Activated CD4-positive, alpha-beta T cell treated with anti-CD3 and anti-CD28 coated beads, Interleukin-2, amount 10 ng/mL, durations not matched to agents 24 days and 14 days (primary cell): ENCODE measurements at regions of chr9 and their contacts with region 1.

Region 1: GRCh38 chr9:33816327-33817252 is at the start of gene UBE2R2:
- DNase-seq: peak; percentile 97
- H3K4me3 Mint-ChIP-seq: peak within 1 kb of the TSS; percentile 94
- H3K27ac Mint-ChIP-seq: peak within 1 kb of the TSS; percentile 95
- H3K4me1 Mint-ChIP-seq: peaks cover 48% of the 10 kb centered on the region
- H3K27me3 Mint-ChIP-seq: peaks cover 3% of the 10 kb centered on the region
- total RNA-seq, gene UBE2R2: 41.6 and 41.9 TPM in 2 replicates

Region 2: DNA sequence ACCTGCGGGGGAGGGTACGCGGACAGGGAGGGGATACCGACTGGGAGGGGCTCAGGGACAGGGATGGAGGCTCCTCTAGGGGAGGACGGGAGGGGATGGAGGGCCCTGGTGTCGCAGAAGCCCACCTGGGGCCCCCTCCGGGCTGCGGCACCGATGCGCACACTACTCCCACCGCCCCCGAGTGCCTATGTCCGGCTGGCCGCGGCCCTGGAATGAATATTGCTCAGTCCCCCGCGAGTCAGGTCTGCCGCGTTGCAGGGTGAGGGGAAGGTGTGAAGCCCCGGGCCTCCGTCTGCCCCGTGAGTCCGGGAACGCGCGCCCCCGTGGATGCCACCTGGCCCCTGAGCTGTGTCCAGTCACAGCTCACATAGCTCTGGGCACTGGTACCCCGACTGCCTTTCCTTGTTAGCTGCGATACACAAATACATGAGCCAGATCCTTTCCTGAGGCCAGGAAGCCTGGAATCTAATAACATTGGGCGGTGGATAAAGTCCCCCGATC is 65.7 kb before region 1 on chr9:
- intact Hi-C with region 1: no loop called
- DNase-seq: no peak
- H3K4me3 Mint-ChIP-seq: no peak overlapping the region
- H3K27ac Mint-ChIP-seq: no peak overlapping the region
- H3K4me1 Mint-ChIP-seq: peaks cover 10% of the 10 kb centered on the region
- H3K27me3 Mint-ChIP-seq: peaks cover 76% of the 10 kb centered on the region

Region 3: DNA sequence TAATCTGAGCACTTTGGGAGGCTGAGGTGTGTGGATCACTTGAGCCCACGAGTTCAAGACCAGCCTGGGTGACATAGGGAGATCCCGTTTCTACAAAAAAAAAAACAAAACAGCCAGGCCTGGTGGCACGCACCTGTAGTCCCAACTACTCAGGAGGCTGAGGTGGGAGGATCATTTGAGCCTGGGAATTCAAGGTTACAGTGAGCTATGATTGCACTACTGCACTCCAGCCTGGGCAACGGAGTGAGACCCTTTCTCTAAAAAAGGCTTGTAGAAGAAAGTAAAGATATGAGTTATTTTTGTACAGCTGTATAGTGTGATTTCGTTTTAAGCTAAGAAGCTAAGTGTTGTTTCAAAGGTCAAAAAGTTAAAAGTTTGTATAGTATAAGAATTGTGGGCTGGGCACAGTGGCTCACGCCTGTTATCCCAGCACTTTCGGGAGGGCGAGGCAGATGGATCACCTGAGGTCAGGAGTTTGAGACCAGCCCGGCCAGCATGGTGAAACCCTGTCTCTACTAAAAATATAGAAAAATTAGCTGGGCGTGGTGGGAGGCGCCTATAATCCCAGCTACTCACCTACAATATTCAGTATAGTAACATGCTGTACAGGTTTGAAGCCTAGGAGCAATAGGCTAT is 19.2 kb after region 1 on chr9:
- intact Hi-C with region 1: loop called (anchors 1 kb)
- DNase-seq: no peak
- H3K4me3 Mint-ChIP-seq: no peak overlapping the region
- H3K27ac Mint-ChIP-seq: peak overlapping the region; percentile 48
- H3K4me1 Mint-ChIP-seq: peaks cover 20% of the 10 kb centered on the region
- H3K27me3 Mint-ChIP-seq: no peaks in the 10 kb centered on the region

Region 4: DNA sequence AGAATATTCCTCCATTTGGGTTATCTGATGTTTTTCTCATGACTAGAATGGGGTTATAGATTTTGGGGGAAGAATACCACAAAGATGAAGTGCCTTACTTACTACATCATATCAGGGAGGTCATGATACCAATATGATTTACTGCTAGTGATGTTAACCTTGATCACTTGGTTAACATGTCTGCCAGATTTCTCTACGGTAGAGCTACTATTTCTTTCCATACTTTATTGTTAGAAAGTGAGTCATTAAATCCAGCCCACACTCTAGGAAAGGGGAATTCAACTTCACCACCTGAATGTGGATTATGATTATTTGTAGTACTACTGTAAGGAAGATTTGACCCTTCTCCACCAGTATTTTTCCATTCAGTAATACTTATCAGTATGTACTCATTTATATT is 65.0 kb after region 1 on chr9:
- intact Hi-C with region 1: loop called (anchors 2 kb)
- DNase-seq: no peak
- H3K4me3 Mint-ChIP-seq: peak overlapping the region; percentile 61
- H3K27ac Mint-ChIP-seq: peak overlapping the region; percentile 94
- H3K4me1 Mint-ChIP-seq: peaks cover 26% of the 10 kb centered on the region
- H3K27me3 Mint-ChIP-seq: no peaks in the 10 kb centered on the region

Region 5: DNA sequence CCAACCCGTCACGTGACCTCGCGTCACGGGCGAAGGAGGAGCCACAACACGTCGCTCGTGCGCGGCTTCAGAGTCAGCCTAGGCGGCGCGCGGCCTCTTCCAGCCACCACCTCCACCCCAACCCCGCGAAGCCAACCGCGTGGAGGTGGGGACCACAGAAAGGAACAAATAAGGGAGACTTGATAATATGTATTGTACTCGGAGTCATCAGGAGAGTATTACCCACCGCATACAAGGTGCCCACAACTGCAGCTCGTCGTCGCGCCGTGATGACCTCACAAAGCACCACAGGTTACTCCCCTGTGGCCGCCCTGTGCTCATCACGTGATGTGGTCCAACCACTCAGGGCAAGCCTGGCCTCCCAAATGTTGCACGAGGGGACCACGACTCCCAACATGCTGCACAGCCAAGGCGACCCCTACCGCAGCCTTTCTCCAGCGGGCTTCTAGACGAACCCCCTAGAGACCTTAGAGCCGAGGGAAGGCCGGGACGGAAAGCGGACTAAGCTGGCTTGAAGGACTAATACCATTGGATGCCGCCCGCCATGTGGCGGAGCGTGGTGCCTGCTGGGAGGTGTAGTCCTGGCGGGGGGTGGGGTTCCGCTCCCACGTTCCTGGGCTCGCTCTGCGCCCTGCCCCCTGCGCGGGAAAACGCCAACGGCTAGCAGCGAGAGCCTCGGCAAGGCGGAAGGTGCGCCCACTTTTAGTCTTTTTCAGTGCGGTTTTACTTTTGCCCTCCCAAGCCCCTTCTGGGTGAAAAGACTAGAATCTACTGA is 232.5 kb after region 1 on chr9:
- intact Hi-C with region 1: loop called (anchors 1 kb)
- DNase-seq: peak; percentile 99
- H3K4me3 Mint-ChIP-seq: peak overlapping the region; percentile 96
- H3K27ac Mint-ChIP-seq: peak overlapping the region; percentile 99
- H3K4me1 Mint-ChIP-seq: peaks cover 41% of the 10 kb centered on the region
- H3K27me3 Mint-ChIP-seq: peaks cover 3% of the 10 kb centered on the region

Region 6: DNA sequence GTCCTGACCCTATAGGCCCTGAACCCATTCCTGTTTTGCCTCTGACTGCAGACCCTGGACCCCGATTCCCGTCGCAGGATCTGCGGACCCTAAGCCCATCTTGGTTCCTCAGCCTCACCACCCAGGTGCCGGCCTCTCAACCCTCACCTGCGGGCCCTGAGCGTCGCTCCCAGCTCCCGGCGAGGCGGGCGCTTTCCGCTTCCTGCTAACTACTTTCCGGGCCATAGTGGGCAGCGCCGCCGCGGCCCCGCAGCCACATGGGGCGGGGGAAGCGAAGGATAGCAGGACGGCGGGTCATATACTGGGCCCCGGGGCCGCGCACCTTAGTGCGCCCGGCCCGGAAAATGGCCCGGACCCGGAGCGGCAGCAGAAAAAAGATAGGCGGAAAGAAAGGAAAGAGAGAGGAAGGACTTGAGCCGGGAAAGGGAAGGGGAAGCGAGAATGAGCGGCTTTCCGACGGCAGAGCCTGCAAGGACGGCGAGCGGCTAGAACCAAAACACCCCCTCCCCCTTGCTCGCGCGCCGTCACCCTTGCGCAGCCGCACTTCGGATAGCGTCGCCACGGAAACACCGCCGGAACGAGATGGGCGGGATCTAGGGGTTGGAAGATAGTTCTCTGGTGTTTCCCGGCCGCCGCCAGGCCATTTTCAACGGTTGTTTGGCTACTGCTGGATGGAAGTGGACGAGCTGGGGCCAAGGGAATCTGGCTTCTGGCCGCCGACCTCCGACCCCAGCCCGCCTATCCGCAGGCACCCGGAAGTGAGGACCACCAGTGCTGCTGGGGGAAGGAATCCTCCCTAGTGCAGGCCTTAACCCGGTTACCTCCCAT is 309.8 kb after region 1 on chr9 and contains the start of gene DCAF12:
- intact Hi-C with region 1: loop called (anchors 2 kb)
- DNase-seq: peak; percentile 98
- H3K4me3 Mint-ChIP-seq: peak within 1 kb of the TSS; percentile 92
- H3K27ac Mint-ChIP-seq: peak within 1 kb of the TSS; percentile 98
- H3K4me1 Mint-ChIP-seq: peaks cover 38% of the 10 kb centered on the region
- H3K27me3 Mint-ChIP-seq: no peaks in the 10 kb centered on the region
- total RNA-seq, gene DCAF12: 45.6 and 51.9 TPM in 2 replicates

Region 7: GRCh38 chr9:34328987-34329832 is 512.6 kb after region 1 on chr9 and contains the starts of genes KIF24 and NUDT2:
- intact Hi-C with region 1: loop called (anchors 2 kb)
- DNase-seq: peak; percentile 99
- H3K4me3 Mint-ChIP-seq: peak within 1 kb of the TSS; percentile 89
- H3K27ac Mint-ChIP-seq: peak within 1 kb of the TSS; percentile 97
- H3K4me1 Mint-ChIP-seq: peaks cover 32% of the 10 kb centered on the region
- H3K27me3 Mint-ChIP-seq: no peaks in the 10 kb centered on the region
- total RNA-seq, gene KIF24: 5.9 and 6.2 TPM in 2 replicates
- total RNA-seq, gene NUDT2: 30.4 and 31.9 TPM in 2 replicates

Region 8: DNA sequence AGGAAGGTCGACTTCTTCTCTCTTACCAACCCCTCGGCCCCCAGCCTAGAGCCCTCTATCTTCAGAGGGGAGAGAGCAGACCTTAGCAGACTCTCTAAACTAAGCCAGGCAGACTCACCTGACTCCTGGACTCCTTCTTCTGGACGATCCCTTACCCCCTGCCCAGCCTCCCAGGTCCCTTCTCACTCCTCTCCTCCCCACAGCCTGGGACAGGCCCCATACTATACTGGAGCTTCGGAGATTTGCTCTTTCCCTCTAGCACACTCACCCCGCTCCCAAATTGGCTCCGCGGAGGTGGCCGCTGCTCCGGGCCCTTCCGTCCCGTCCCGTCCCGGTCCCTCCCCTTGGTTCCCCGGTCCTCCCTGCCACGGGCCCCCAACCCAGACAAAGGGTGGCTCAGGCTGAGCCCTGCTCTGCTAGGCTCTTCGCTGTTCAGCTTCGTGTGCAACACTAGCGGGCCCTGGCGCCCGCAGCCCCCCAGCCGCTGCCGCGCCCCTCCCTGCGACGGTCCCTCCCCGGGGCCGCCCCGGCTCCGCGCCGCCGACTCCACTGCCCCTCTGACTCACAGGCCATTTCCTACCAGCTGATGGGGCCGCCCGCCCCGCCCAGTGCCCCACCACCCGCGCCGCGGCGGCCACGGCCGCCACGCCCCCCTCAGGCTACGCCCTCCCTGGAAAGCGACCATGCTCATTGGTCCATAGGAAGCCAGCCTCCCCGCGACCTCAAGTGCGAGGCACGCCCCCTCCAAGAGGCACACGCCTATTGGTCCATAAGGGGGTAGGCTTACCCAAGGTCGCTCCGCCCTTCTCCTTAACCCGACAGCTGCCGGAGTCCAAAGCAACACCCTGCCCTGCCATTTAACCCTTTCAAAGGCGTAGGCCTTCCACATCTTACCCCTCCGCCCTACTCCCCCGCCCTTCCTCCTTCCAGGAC is 1294.7 kb after region 1 on chr9:
- intact Hi-C with region 1: loop called (anchors 5 kb)
- DNase-seq: peak; percentile 98
- H3K4me3 Mint-ChIP-seq: peak overlapping the region; percentile 71
- H3K27ac Mint-ChIP-seq: peak overlapping the region; percentile 85
- H3K4me1 Mint-ChIP-seq: peaks cover 49% of the 10 kb centered on the region
- H3K27me3 Mint-ChIP-seq: no peaks in the 10 kb centered on the region